ENCODE measurements at regions of chr3 and their contacts with region 1.

Region 1: DNA sequence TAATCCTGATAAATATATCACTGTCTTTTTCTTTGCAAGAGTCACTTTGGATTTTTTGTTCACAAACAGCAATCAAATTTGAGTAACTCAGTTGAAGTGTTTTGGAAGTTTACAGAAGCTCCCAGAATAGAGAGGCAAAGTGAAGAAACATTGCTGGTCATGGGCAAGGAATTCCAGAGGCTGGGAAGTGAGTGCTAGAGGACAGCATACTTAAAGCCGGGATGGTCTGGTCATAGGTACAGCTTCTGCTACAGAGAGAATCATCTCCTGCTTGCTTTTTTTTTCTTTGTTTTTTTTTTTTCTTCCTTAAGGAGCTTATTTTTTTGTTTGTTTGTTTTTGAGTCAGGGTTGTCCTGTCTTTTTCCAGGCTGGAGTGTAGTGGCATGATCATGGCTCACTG is 153.5 kb downstream of the PTPRG start:
- DNase-seq: no peak
- ATAC-seq: no peak
- H3K4me3 ChIP-seq: no peak overlapping the region
- H3K27ac ChIP-seq: no peak overlapping the region
- H3K4me1 ChIP-seq: peaks cover 16 to 26% of the 10 kb centered on the region in 2 donors
- H3K27me3 ChIP-seq: no peaks in the 10 kb centered on the region
- CTCF ChIP-seq: no peak
- POLR2A ChIP-seq: no peak

Region 2: GRCh38 chr3:61690016-61690415 is 24.9 kb before region 1 on chr3:
- in situ Hi-C with region 1: no loop called
- intact Hi-C with region 1: loop called (anchors 1 kb)
- DNase-seq: no peak
- ATAC-seq: no peak
- H3K4me3 ChIP-seq: no peak overlapping the region
- H3K27ac ChIP-seq: no peak overlapping the region
- H3K4me1 ChIP-seq: peaks cover 26 to 30% of the 10 kb centered on the region in 2 donors
- H3K27me3 ChIP-seq: no peaks in the 10 kb centered on the region
- CTCF ChIP-seq: no peak
- POLR2A ChIP-seq: no peak